Breast epithelium (tissue), 4 donors: ENCODE measurements at regions of chr10 and their contacts with region 1.

Region 1: DNA sequence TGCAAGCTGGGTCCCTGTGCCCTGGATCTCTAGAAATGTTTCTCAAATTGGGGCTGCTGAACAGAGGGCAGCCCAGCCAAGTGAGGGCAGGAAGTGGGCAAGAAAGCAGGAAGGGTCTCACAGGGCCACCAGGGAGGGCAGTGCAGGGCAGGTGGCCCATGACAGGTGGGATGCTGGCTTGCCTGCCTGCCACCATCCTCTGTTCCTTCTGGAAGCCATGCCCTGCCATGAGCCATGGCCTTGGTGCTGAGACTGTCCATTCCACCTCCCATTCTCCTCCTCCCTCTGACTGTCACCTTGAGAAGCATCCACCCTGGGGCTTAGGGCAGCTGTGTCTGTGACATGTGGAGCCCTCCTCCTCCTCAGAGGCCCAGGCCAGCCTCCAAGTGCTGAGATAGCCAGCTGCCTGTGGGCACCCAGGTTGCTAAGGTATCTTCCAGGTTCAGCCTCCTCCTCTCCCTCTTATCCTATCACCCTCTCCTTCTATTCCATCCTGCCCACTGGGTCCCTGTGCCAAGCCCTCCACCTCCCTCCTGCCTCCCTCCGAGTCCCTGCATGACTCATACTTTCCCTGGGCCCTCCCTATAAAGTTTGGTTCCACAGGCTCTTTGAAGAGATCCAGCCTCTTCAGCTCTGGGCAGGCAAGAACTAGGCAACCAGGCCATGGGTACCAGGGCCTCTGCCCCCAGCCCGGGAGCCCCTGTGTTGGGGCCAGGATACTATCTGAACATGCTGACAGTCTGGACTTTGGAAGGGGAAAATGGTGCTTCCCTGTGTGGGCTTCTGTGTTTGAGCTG is 1.3 kb downstream of the VSIR start:
- DNase-seq: peak in 1 of 2 donors; percentile 74
- H3K4me3 ChIP-seq: peak overlapping the region; percentile 59 to 86 (median 81)
- H3K27ac ChIP-seq: peak overlapping the region; percentile 82 to 94
- H3K4me1 ChIP-seq: peaks cover 9 to 11% of the 10 kb centered on the region in 2 donors
- H3K27me3 ChIP-seq: no peaks in the 10 kb centered on the region
- CTCF ChIP-seq: no peak
- POLR2A ChIP-seq: no peak

Region 2: DNA sequence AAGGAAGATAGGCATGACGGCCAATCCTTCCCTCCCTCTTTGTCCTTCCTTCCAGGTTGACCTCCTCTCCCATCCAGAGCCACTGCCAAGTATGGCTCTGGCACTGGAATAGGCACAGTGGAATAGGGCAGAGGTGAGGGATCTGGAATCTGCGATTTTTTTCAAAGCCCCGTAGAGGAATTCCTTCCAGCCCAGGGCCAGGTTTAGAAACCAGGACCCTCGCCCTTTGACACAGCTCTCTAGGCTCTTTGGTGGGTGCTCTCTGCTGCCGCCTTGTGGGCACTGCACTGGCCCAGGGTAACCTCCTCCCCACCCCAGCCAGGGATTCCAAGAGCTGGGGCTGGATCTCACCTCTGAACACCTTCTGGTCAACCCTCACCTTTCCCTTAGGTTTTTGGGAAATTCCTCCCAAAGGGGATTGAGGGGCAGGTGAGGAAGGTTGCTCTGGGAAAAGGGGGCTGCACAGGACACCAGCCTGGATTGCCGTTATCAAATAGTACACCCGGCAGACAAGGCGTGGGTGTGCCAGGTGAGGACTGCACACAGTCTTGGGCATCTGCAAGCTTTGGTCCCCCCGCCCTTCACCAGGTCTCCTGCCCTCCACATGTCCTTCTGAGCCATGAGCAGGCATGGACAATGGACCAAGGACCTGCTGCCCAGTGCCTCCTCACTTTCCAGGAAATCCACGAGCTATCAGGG is 75.2 kb before region 1 on chr10:
- intact Hi-C with region 1: loop called (anchors 1 kb)
- DNase-seq: no peak
- H3K4me3 ChIP-seq: no peak overlapping the region
- H3K27ac ChIP-seq: no peak overlapping the region
- H3K4me1 ChIP-seq: no peaks in the 10 kb centered on the region
- H3K27me3 ChIP-seq: no peaks in the 10 kb centered on the region
- CTCF ChIP-seq: peak in 2 of 3 donors; percentile 66 to 77
- POLR2A ChIP-seq: no peak